MCF 10A (cell line): ENCODE measurements at regions of chr6 and their contacts with region 1.

Region 1: DNA sequence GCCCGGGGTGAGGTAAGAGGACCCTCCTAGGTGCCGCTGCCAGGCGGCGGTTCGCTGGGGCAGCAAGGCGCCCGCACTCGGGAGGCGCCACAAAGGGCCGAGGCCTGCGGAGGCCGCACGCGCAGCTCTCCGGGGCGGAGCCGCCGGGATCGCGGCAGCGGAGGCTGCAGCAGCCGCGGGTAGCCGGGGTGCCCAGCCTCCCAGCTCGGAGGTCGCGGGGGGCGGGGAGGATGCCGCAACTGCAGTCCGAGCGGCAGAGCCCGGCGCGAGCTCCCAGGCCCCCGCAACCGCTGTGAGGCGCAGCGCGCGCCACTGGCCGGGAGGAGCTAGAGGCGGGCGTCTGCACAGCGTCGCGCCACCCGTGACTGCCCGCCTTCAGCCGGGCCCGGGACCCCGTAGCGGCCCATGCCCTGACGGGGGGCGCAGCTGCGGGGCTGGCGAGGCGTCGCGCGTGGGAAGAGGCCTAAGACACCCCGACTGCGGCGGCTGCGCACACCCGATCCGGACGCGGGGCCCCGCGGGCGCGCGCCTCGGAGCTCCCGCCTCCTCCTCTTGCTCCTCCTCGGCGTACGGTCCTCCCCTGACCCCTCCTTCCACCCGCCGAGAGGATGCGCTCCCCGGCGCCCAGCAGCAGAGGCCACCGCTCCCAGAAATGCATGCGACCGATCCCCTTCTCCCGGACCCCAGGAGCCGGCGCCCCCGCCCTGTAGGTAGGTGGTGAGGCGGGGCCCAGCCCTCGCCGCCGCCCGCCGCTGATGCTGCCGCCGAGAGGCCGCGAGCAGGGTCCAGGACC is at the start of gene NCOA7:
- DNase-seq: peak; percentile 73
- H3K4me3 Mint-ChIP-seq: peak within 1 kb of the TSS; percentile 93
- H3K27ac Mint-ChIP-seq: peak within 1 kb of the TSS; percentile 93
- H3K4me1 Mint-ChIP-seq: peaks cover 40% of the 10 kb centered on the region
- H3K27me3 Mint-ChIP-seq: no peaks in the 10 kb centered on the region
- CTCF ChIP-seq: no peak
- total RNA-seq, gene NCOA7: 50.9 and 52.3 TPM in 2 replicates

Region 2: DNA sequence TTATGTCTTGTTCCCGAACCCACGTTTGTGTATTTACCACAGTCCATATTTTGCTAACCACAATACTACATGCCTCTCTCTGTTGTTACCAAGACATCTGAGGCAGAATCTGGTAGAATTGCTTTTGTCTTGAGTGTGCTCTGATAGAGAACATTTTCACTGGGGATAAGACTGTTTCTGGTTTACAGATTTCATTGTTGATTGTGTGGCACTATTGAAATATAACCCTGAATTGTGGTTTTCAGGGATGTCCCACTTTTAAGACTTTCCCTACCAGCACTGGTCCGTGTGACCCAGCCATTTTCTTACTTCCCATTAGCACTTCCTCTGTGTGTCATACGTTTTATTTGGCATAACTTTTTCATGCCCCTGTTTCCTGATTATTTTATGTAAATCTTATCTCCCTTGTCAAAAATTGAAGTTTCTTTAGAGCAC is 12.4 kb after region 1 on chr6:
- CTCF ChIA-PET with region 1: interaction called, 8 read pairs
- POLR2A ChIA-PET with region 1: interaction called, 11 read pairs
- intact Hi-C with region 1: no loop called
- DNase-seq: no peak
- H3K4me3 Mint-ChIP-seq: no peak overlapping the region
- H3K27ac Mint-ChIP-seq: no peak overlapping the region
- H3K4me1 Mint-ChIP-seq: peaks cover 20% of the 10 kb centered on the region
- H3K27me3 Mint-ChIP-seq: no peaks in the 10 kb centered on the region
- CTCF ChIP-seq: no peak

Region 3: GRCh38 chr6:125850361-125850760 is 59.8 kb after region 1 on chr6:
- CTCF ChIA-PET with region 1: interaction called, 12 read pairs
- POLR2A ChIA-PET with region 1: interaction called, 21 read pairs
- intact Hi-C with region 1: no loop called
- DNase-seq: no peak
- H3K4me3 Mint-ChIP-seq: no peak overlapping the region
- H3K27ac Mint-ChIP-seq: no peak overlapping the region
- H3K4me1 Mint-ChIP-seq: peaks cover 8% of the 10 kb centered on the region
- H3K27me3 Mint-ChIP-seq: no peaks in the 10 kb centered on the region
- CTCF ChIP-seq: no peak

Region 4: GRCh38 chr6:125906158-125906998 is 115.8 kb after region 1 on chr6:
- CTCF ChIA-PET with region 1: interaction called, 12 read pairs
- POLR2A ChIA-PET with region 1: interaction called, 9 read pairs
- intact Hi-C with region 1: no loop called
- DNase-seq: peak; percentile 69
- H3K4me3 Mint-ChIP-seq: no peak overlapping the region
- H3K27ac Mint-ChIP-seq: peak overlapping the region; percentile 24
- H3K4me1 Mint-ChIP-seq: peaks cover 41% of the 10 kb centered on the region
- H3K27me3 Mint-ChIP-seq: no peaks in the 10 kb centered on the region
- CTCF ChIP-seq: peak; percentile 59

Region 5: DNA sequence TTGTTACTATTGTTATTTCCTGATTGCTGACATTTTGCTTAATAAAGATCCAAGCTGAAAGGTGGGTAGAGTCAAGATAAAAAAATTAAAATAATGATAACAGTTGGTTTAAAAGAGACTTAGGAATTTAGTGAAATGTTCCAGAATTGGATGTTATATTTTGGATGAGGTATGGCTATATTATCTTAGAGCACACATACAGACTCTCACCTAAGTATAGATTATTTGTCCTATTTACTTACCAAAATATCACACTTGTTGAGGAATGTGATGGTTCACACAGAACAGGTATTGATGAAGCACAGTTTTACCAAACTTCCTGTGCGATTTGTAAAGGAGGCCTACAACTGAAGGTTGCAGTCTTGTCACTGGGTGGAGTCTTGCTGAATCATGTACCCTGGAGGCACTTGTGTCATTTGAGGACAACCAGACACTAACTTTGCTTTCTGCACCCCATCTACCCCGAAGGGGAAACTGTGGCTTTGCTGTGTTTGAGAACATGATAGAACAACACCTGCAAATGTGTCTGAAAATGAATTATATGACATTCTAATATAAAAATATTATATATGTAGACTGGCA is 133.5 kb after region 1 on chr6:
- CTCF ChIA-PET with region 1: interaction called, 26 read pairs
- POLR2A ChIA-PET with region 1: interaction called, 51 read pairs
- intact Hi-C with region 1: loop called (anchors 2 kb)
- DNase-seq: peak; percentile 73
- H3K4me3 Mint-ChIP-seq: peak overlapping the region; percentile 34
- H3K27ac Mint-ChIP-seq: peak overlapping the region; percentile 80
- H3K4me1 Mint-ChIP-seq: peaks cover 39% of the 10 kb centered on the region
- H3K27me3 Mint-ChIP-seq: no peaks in the 10 kb centered on the region
- CTCF ChIP-seq: no peak

Region 6: DNA sequence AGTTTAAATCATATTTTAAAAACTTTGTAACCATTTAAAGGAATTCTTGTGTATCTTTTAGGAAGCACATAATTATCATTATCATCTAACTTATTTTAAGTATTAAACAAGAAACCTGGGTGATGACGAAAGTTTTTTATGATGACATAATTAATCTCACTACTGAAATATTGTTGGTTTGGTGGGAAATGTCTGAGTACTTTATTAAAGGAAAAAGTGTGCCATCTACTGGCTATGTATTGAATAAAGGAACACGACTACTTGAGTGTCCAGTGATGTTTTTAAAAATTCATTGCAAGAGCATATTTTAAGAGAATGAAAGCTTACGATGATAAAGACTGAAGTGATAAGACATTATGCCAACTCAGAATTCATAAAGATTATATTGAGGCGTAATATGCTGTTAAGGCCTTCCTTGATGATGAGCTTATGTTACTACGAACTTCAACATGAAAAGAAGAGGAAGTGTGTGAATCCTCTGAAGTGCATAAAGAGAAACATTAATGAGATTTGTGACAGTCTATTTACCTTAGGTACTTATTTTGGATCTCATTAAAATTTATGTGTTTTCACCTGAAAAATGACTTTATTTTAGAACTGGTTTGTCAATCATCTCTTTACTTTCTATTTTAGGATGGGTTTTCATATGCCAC is 183.8 kb after region 1 on chr6:
- CTCF ChIA-PET with region 1: interaction called, 57 read pairs
- POLR2A ChIA-PET with region 1: interaction called, 10 read pairs
- intact Hi-C with region 1: no loop called
- DNase-seq: peak; percentile 66
- H3K4me3 Mint-ChIP-seq: no peak overlapping the region
- H3K27ac Mint-ChIP-seq: no peak overlapping the region
- H3K4me1 Mint-ChIP-seq: peaks cover 5% of the 10 kb centered on the region
- H3K27me3 Mint-ChIP-seq: no peaks in the 10 kb centered on the region
- CTCF ChIP-seq: peak; percentile 44

Region 7: DNA sequence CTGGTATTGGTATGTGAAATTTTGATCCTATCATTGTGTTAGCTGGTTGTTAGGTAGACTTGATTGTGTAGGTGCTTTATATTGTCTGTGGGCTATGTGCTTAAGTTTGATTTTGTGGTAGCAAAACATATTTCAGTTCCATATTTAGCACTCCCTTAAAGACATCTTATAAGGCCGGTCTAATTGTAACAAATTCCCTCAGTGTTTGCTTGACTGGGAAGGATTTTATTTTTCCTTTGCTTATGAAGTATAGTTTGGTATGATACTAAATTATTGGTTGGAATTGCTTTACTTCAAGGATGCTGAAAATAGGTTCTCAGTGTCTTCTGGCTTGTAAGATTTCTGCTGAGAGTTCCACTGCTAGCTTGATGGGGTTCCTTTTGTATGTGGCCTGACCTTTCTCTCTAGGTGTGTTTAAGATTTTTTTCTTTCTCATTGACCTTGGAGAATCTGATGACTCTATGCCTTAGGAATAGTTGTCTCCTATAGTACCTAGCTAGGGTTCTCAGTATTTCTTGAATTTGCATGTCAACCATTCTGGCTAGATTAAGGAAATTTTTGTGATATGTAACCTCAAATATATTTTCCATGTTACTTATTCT is 569.5 kb after region 1 on chr6:
- CTCF ChIA-PET with region 1: no interaction called
- POLR2A ChIA-PET with region 1: no interaction called
- intact Hi-C with region 1: no loop called
- DNase-seq: no peak
- H3K4me3 Mint-ChIP-seq: no peak overlapping the region
- H3K27ac Mint-ChIP-seq: no peak overlapping the region
- H3K4me1 Mint-ChIP-seq: no peaks in the 10 kb centered on the region
- H3K27me3 Mint-ChIP-seq: no peaks in the 10 kb centered on the region
- CTCF ChIP-seq: no peak